ENCODE measurements at regions of chr2 and their contacts with region 1.

Region 1: DNA sequence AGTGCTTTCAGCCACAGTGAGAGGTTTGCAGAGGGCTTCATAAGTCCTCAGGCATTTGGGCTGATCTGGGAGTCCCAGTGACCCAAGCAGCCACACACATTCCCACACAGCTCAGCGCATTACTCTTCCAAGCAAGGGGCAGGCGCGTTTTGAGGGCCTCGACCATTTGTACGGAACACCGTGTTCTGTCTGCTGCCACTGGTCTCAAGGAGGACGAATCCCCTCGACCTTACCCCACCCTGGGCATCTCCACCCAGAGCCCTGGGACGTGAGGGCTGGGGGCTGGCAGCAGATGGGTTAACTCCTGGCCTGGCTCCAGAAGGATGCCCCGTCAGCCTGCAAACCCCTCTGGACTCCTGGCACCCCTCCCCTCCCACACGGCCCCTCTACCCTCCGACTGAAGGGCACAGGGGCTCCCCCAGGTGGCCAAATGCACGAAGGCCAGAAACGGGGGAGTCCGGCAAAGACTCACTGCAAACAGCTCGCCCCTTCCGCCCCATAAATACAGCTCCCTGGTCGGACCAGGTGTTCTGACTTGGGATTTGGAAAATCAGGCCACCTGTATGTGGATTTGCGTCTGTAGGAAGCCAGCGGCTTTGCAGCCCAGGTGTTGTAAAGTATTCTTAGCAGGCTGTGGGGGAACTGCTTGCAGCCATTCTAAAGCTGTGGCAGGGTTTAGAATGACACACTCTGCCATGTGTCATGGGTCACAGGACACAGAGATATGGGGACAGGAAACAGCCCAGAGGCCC is 33.6 kb upstream of the PTMA start:
- DNase-seq: peak in 1 of 3 donors; percentile 65
- ATAC-seq: peak; percentile 58 to 65 (median 61)
- H3K4me3 ChIP-seq: no peak overlapping the region
- H3K27ac ChIP-seq: no peak overlapping the region
- H3K4me1 ChIP-seq: peaks cover 0 to 4% (median 1%) of the 10 kb centered on the region in 4 donors
- H3K27me3 ChIP-seq: no peaks in the 10 kb centered on the region
- CTCF ChIP-seq: peak; percentile 66 to 85 (median 73)
- POLR2A ChIP-seq: no peak

Region 2: GRCh38 chr2:231399853-231400680 is 274.7 kb before region 1 on chr2:
- intact Hi-C with region 1: no loop called
- DNase-seq: peak in 2 of 3 donors; percentile 54 to 76
- ATAC-seq: peak; percentile 83 to 89 (median 89)
- H3K4me3 ChIP-seq: peak overlapping the region in 2 of 3 donors; percentile 7 to 24
- H3K27ac ChIP-seq: peak overlapping the region in 1 of 3 donors; percentile 20
- H3K4me1 ChIP-seq: peaks cover 0 to 6% (median 0%) of the 10 kb centered on the region in 4 donors
- H3K27me3 ChIP-seq: no peaks in the 10 kb centered on the region
- CTCF ChIP-seq: no peak
- POLR2A ChIP-seq: no peak

Region 3: DNA sequence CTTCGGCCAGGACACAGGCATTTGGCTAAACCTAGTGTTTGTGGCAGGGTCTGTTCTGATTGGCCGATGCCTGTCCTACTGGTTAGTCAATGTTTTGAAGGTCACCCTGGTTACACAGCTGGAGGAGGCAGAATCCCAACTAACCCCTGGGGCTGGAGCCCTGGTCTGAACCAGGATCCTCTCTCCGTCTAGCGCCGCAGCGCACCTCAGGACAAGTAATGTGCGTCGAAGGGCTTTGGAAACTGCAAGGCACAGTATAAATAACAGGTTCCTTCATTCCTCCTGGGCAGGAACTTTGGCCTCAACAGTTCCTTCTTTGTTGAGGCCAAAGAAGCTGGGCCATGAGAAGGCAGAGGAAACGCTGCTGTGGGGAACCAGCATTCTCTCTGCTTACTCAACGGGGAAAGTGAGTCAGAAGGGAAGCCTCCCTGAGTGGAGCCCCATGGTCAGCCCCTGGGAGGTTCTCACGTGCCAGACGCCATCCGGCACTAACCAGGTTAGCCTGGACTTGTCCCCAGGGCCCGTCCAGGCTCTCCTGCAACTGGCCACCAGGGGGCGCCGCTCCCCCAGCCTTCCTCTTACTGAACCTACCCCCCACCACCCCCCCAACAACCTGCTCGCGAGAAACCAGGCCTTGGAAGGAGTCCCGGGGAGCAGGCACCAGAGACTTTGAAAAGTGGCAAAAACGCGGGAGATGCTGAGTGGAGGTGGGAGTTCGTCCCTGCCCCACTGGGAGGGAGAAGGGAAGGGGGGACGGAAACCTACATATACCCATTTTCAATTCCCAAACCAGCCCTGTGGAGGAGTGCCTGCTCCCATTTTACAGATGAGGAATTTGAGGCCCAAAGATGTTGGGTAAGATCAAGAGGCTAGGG is 62.3 kb before region 1 on chr2:
- intact Hi-C with region 1: loop called in 1 of 2 experiments (anchors 5 kb)
- DNase-seq: peak; percentile 85 to 88 (median 87)
- ATAC-seq: peak; percentile 68 to 82 (median 80)
- H3K4me3 ChIP-seq: no peak overlapping the region
- H3K27ac ChIP-seq: peak overlapping the region; percentile 15 to 87 (median 73)
- H3K4me1 ChIP-seq: peaks cover 0 to 18% (median 4%) of the 10 kb centered on the region in 4 donors
- H3K27me3 ChIP-seq: peaks cover 0 to 5% of the 10 kb centered on the region in 2 donors
- CTCF ChIP-seq: peak; percentile 88 to 91 (median 90)
- POLR2A ChIP-seq: no peak

Region 4: DNA sequence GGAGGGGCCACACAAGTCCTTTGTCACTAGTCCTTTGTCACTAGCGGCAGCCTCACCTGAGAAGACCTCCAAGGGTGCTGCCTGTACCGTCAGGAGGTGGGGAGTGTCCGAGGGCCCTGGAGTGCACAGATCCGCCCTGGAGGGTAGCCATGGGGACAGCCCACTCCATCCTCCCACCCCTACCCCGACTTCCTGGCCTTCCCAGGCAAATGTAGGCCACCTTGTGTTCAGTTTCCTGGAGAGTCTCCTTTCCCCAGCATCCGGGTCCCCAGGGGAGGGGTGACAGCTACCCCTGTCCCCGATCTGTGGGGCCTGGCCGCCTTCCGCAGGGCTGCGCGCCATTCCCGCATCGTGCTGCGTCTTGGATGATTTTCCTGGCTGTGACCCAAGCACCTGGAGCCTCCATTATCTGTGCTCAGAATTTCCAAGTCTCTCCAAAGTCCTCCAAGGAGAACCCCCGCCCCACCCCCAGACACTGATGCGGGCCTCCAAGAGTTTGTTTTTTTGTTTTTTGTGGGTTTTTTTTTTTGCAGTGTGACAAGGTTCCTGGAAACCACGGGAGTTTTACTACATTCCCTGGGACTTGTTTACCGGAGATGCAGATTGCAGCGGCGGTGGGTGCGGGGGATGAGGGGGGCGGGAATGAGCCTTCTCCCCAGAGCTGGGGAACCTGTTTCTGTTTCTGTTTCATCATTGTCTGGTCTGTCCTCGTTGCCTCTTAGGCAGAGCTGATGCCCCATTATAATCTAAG is 53.5 kb before region 1 on chr2:
- intact Hi-C with region 1: loop called in 1 of 2 experiments (anchors 5 kb)
- DNase-seq: peak in 1 of 3 donors; percentile 39
- ATAC-seq: peak; percentile 37 to 75 (median 52)
- H3K4me3 ChIP-seq: no peak overlapping the region
- H3K27ac ChIP-seq: no peak overlapping the region
- H3K4me1 ChIP-seq: no peaks in the 10 kb centered on the region
- H3K27me3 ChIP-seq: no peaks in the 10 kb centered on the region
- CTCF ChIP-seq: no peak
- POLR2A ChIP-seq: no peak

Region 5: GRCh38 chr2:231709981-231710798 is 35.4 kb after region 1 on chr2:
- intact Hi-C with region 1: loop called (anchors 5 kb)
- DNase-seq: peak; percentile 88 to 89 (median 89)
- ATAC-seq: peak; percentile 21 to 45 (median 35)
- H3K4me3 ChIP-seq: peak overlapping the region; percentile 71 to 97 (median 94)
- H3K27ac ChIP-seq: peak overlapping the region; percentile 91 to 100 (median 96)
- H3K4me1 ChIP-seq: peaks cover 0 to 27% (median 13%) of the 10 kb centered on the region in 4 donors
- H3K27me3 ChIP-seq: no peaks in the 10 kb centered on the region
- CTCF ChIP-seq: peak; percentile 77 to 99 (median 90)
- POLR2A ChIP-seq: peak; percentile 93

Region 6: GRCh38 chr2:231715258-231715997 is 40.7 kb after region 1 on chr2:
- intact Hi-C with region 1: loop called (anchors 5 kb)
- DNase-seq: peak; percentile 58 to 74 (median 74)
- ATAC-seq: peak; percentile 7 to 37 (median 18)
- H3K4me3 ChIP-seq: no peak overlapping the region
- H3K27ac ChIP-seq: no peak overlapping the region
- H3K4me1 ChIP-seq: peaks cover 0 to 20% (median 10%) of the 10 kb centered on the region in 4 donors
- H3K27me3 ChIP-seq: no peaks in the 10 kb centered on the region
- CTCF ChIP-seq: peak; percentile 85 to 95 (median 88)
- POLR2A ChIP-seq: no peak

Region 7: DNA sequence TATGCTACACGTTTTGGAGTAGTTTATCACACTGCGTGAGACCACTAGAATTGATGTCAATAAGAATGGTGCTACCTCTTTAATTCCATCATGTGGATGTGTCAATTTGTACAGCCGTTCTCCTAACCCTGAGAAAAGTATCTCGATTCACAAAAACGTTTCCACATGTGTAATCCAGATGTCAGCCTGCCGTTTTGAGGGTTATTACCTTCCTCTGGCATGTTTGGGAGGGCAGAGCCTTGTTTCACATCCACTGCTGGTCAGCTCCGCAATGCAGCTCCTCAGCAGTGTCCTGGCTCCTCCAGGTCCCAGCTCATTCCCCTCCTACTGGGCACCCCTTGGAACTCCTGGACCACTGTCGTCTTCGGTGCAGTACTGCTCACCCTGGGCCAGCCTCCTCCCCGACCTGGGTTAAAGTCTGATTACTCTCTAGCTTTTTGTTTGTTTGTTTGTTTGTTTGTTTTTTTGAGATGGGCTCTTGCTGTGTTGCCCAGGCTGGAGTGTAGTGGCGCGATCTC is 146.1 kb after region 1 on chr2:
- intact Hi-C with region 1: no loop called
- DNase-seq: no peak
- ATAC-seq: no peak
- H3K4me3 ChIP-seq: no peak overlapping the region
- H3K27ac ChIP-seq: no peak overlapping the region
- H3K4me1 ChIP-seq: no peaks in the 10 kb centered on the region
- H3K27me3 ChIP-seq: no peaks in the 10 kb centered on the region
- CTCF ChIP-seq: no peak
- POLR2A ChIP-seq: no peak

Region 8: DNA sequence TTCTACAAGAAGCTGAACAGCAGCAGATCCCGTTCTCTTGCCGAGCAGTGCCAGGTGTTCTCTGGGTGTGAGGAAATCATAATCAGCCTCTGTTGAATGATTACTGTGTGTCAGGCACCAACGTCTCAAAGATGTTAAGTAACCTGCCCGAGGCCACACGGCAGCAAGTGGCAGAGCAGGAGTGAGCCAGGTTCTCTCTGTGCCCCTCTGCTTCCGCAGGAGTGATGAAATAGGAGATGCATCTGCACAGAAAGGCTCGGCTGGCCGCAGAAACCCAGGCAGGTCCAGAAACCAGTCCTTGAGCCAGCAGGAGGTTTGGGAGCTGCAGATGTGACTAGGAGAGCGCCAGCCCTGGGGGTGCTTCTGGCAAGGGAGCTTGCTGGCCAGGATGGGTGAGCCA is 179.9 kb after region 1 on chr2:
- intact Hi-C with region 1: no loop called
- DNase-seq: no peak
- ATAC-seq: no peak
- H3K4me3 ChIP-seq: no peak overlapping the region
- H3K27ac ChIP-seq: no peak overlapping the region
- H3K4me1 ChIP-seq: no peaks in the 10 kb centered on the region
- H3K27me3 ChIP-seq: no peaks in the 10 kb centered on the region
- CTCF ChIP-seq: no peak
- POLR2A ChIP-seq: no peak